ENCODE measurements at regions of chr12 and their contacts with region 1.

Region 1: GRCh38 chr12:56127888-56128669 is at the start of gene ESYT1:
- DNase-seq: peak; percentile 99 to 100
- H3K4me3 ChIP-seq: peak within 1 kb of the TSS; percentile 73 to 80
- H3K27ac ChIP-seq: peak within 1 kb of the TSS; percentile 87 to 88
- H3K4me1 ChIP-seq: peaks cover 9 to 21% of the 10 kb centered on the region in 2 donors
- H3K27me3 ChIP-seq: no peaks in the 10 kb centered on the region
- CTCF ChIP-seq: no peak
- total RNA-seq, gene ESYT1: 119 TPM

Region 2: DNA sequence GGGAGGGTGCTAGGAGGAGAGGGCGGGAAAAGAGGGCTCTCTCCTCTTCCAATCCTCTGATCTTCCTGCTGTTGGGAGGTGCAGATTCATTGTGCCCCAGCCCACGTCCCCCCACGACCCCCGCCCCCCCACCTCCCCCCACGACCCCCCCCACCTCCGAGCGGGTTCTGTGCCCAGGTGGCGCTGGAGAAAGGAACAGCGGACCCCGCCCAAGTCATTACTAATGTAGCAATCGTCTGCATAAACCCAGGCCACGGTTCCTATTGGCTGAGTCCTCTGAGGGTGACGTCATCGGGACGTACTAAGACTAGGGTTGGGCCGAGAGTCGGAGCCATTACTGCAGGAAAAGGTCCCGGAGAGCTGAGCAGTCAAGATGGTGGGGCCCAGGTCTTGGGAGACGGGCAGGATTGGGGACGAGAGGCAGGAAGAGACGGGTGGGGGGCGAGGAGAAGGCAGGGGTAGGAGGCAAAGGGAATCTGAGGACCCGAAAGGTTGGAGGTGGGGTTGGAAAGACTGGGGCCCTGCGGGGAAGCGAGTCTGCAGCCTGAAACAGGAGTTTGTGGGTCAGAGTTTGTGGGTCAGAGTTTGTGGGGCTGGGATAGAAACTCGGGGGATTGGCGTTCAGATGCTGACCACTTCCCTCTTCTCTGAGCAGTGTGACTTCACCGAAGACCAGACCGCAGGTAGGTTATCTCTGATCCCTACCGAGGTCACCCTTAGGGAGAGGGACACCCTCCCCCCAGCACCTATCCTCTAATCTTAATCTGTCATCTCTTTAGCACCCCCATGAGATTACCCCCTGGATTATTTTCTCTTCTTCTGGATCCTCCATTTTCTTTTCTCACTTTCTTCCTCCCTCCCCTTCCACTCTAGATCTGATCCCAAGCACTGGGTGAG is 30.2 kb after region 1 on chr12 and contains the start of gene MYL6:
- intact Hi-C with region 1: loop called (anchors 1 kb)
- DNase-seq: peak; percentile 95 to 99
- H3K4me3 ChIP-seq: peak within 1 kb of the TSS; percentile 83 to 96
- H3K27ac ChIP-seq: peak within 1 kb of the TSS; percentile 91 to 94
- H3K4me1 ChIP-seq: peaks cover 10 to 42% of the 10 kb centered on the region in 2 donors
- H3K27me3 ChIP-seq: no peaks in the 10 kb centered on the region
- CTCF ChIP-seq: no peak
- total RNA-seq, gene MYL6: 1,476 TPM

Region 3: DNA sequence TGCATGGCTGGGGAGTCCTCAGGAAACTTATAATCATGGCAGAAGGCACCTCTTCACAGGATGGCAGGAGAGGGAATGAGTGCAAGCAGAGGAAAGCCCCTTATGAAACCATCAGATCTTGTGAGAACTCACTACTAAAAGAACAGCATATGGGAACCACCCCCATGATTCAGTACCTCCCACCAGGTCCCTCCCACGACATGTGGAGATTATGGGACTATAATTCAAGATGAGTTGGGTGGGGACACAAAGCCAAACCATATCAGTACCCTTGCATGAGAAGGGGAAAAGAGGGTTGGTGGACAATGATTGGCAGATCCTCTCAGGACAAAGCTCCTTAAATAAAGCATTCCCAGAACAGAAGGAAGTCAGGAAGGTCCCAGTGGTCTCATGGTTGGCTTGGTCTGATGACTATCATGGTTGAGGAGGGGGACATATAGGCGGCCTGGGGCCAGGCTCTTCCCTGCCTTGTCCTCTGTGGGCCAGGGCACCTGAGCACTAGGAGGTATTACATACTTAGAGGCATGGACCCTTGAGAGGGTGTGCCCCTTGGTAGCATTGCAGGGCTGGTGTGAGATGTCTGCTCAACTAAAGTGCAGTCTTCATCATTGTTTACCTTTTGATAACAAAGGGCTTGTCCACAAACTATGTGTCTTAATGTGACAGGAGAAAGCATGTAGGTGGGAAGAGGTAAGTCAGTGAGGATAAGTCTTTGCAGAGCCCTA is 657.2 kb after region 1 on chr12:
- intact Hi-C with region 1: no loop called
- DNase-seq: no peak
- H3K4me3 ChIP-seq: no peak overlapping the region
- H3K27ac ChIP-seq: no peak overlapping the region
- H3K4me1 ChIP-seq: no peaks in the 10 kb centered on the region
- H3K27me3 ChIP-seq: no peaks in the 10 kb centered on the region
- CTCF ChIP-seq: no peak

Measured in ascending aorta (tissue), 2 donors.